ENCODE measurements at regions of chr9 and their contacts with region 1.

Region 1: DNA sequence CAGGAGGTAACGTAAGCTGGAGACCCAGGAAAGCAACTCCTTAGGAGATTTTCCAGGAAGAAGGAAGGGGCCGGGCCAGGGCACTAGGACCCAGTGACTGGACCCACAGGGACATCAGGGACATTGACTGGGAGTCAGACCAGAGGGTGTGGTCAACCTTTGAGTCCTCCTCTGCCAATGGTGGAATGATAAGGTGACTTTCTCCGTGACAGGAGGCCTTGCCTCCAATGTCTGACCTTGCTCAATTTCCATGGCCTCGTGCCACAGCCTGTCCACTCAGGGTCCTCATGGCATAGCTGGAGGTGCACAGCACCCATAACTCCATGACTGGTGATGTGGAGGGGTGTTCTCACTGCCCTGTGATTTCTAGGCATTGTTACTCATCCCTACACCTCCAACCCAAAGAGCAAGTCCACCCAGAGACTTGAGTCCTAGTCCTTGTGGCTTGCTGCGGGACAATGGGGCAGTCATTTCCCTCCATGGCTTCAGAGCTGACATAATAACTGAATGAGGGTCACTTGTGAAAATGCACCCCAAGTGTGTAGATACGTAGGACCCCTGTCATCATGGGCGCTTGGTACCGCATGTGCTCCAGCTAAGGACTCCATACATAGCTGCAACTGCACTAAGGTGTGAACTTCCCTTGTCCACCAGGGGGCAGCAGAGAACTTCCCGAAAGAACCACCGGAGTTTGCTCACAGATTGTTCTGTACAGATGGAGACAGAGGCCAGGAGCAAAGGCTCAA is 4.1 kb upstream of the AMBP start:
- DNase-seq: peak; percentile 91
- ATAC-seq: peak; percentile 93
- H3K4me3 Mint-ChIP-seq: no peak overlapping the region
- H3K27ac Mint-ChIP-seq: no peak overlapping the region
- H3K4me1 Mint-ChIP-seq: no peaks in the 10 kb centered on the region
- H3K27me3 Mint-ChIP-seq: no peaks in the 10 kb centered on the region
- CTCF ChIP-seq: peak; percentile 81

Region 2: GRCh38 chr9:113901221-113901688 is 180.9 kb before region 1 on chr9:
- CTCF ChIA-PET with region 1: no interaction called
- POLR2A ChIA-PET with region 1: no interaction called
- intact Hi-C with region 1: no loop called
- DNase-seq: no peak
- ATAC-seq: no peak
- H3K4me3 Mint-ChIP-seq: no peak overlapping the region
- H3K27ac Mint-ChIP-seq: no peak overlapping the region
- H3K4me1 Mint-ChIP-seq: no peaks in the 10 kb centered on the region
- H3K27me3 Mint-ChIP-seq: no peaks in the 10 kb centered on the region
- CTCF ChIP-seq: no peak

Region 3: GRCh38 chr9:114098016-114098935 is 16.1 kb after region 1 on chr9:
- CTCF ChIA-PET with region 1: interaction called, 34 read pairs
- POLR2A ChIA-PET with region 1: no interaction called
- intact Hi-C with region 1: no loop called
- DNase-seq: peak; percentile 47
- ATAC-seq: peak; percentile 84
- H3K4me3 Mint-ChIP-seq: no peak overlapping the region
- H3K27ac Mint-ChIP-seq: no peak overlapping the region
- H3K4me1 Mint-ChIP-seq: peaks cover 4% of the 10 kb centered on the region
- H3K27me3 Mint-ChIP-seq: peaks cover 41% of the 10 kb centered on the region
- CTCF ChIP-seq: no peak

Region 4: GRCh38 chr9:114108016-114108833 is 26.0 kb after region 1 on chr9:
- CTCF ChIA-PET with region 1: interaction called, 58 read pairs
- POLR2A ChIA-PET with region 1: no interaction called
- intact Hi-C with region 1: no loop called
- DNase-seq: peak; percentile 75
- ATAC-seq: peak; percentile 98
- H3K4me3 Mint-ChIP-seq: no peak overlapping the region
- H3K27ac Mint-ChIP-seq: no peak overlapping the region
- H3K4me1 Mint-ChIP-seq: no peaks in the 10 kb centered on the region
- H3K27me3 Mint-ChIP-seq: peaks cover 4% of the 10 kb centered on the region
- CTCF ChIP-seq: peak; percentile 84

Region 5: DNA sequence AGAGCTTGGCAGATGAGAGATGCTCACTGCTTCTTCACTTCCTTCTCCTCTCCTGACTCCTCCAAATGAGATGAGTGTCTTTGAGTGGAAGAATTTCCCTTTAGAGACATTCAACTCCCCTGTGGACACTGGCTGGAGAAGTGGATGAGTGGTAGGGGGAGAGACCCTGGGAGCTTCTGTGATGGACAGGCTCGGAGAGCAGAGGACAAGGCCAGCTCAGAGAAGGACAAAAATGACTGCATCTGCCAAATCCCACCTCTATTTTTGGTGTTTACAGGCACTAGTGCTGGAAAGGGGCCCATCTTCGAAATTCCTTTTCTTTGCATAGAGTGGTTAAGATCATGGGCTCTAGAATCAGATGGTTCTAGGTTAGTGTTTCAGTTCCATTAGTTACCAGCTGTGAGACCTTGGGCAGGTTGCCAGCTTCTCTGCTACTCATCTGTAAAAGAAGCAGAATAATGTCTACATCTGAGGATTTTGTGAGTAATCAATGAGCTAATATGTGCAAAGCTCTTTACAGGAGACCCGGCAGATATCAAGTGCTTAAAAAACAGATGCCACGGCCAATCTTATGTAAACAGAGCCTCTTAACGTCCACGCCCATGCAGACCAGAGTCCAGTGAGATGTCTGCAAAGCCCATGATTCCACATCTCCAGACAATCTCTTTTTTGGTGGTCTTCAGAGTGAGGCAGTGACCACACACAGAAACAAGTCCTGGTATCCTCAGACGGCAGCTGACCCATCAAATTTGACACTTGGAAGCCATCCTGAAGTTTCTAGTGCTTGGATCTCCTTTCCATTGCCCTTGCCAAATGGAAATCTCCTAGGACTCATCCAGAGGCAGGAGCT is 59.6 kb after region 1 on chr9:
- CTCF ChIA-PET with region 1: interaction called, 32 read pairs
- POLR2A ChIA-PET with region 1: no interaction called
- intact Hi-C with region 1: no loop called
- DNase-seq: no peak
- ATAC-seq: no peak
- H3K4me3 Mint-ChIP-seq: no peak overlapping the region
- H3K27ac Mint-ChIP-seq: no peak overlapping the region
- H3K4me1 Mint-ChIP-seq: no peaks in the 10 kb centered on the region
- H3K27me3 Mint-ChIP-seq: peaks cover 7% of the 10 kb centered on the region
- CTCF ChIP-seq: no peak

Region 6: GRCh38 chr9:114155263-114155972 is 73.2 kb after region 1 on chr9 and contains the start of gene COL27A1:
- CTCF ChIA-PET with region 1: interaction called, 10 read pairs
- POLR2A ChIA-PET with region 1: no interaction called
- intact Hi-C with region 1: no loop called
- DNase-seq: peak; percentile 90
- ATAC-seq: peak; percentile 88
- H3K4me3 Mint-ChIP-seq: peak within 1 kb of the TSS; percentile 78
- H3K27ac Mint-ChIP-seq: peak within 1 kb of the TSS; percentile 72
- H3K4me1 Mint-ChIP-seq: peaks cover 21% of the 10 kb centered on the region
- H3K27me3 Mint-ChIP-seq: peaks cover 45% of the 10 kb centered on the region
- CTCF ChIP-seq: peak; percentile 85
- total RNA-seq, gene COL27A1: 8.4 to 9.7 TPM